Endothelial cell of umbilical vein (primary cell): ENCODE measurements at regions of chr1 and their contacts with region 1.

Region 1: GRCh38 chr1:201224666-201225370 is 34.2 kb downstream of the IGFN1 start:
- DNase-seq: no peak
- H3K4me3 ChIP-seq: no peak overlapping the region
- H3K27ac ChIP-seq: no peak overlapping the region
- H3K4me1 ChIP-seq: no peaks in the 10 kb centered on the region
- H3K27me3 ChIP-seq: peaks cover 0 to 2% of the 10 kb centered on the region in 2 experiments
- CTCF ChIP-seq: no peak
- POLR2A ChIP-seq: no peak

Region 2: DNA sequence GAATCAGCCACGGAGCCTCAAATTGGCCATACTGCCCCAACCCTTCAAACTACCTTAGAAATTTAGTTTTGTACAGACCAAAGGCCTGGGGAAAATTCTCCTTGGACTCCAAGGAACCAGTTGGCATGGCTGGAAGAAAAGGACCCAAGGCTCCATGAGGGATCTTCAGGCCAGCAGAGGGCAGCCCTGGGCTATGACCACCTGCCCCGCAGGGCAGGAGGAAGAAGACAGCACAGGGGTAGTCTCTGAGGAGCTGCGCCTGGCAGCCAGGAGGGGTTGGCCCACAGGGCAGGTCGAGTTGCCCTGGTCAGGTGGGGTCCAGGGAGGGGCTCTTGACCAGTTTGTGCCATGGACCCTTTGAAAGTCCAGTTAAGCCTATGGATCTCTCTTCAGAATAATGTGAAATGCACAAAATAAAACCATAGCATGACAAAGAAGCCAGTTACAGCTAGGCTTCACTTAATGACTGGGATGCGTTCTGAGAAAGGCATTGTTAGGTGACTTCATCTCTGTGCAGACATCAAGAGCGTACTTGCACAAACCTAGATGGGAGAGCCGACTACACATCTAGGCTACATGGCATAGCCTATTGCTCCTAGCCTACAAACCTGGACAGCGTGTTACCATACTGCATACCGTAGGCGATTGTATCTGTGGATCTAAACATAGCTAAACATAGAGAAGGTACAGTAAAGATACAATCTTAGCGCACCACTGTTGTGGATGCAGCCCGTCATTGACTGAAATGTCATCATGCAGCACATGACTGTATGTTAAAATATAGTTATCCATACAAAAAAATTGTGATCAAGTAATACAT is 138.7 kb before region 1 on chr1:
- CTCF ChIA-PET with region 1: interaction called, 8 read pairs
- POLR2A ChIA-PET with region 1: no interaction called
- dilution Hi-C with region 1: no loop called
- intact Hi-C with region 1: loop called (anchors 5 kb)
- DNase-seq: peak; percentile 31
- H3K4me3 ChIP-seq: no peak overlapping the region
- H3K27ac ChIP-seq: no peak overlapping the region
- H3K4me1 ChIP-seq: no peaks in the 10 kb centered on the region
- H3K27me3 ChIP-seq: peaks cover 7% of the 10 kb centered on the region in 2 experiments
- CTCF ChIP-seq: peak; percentile 36 to 70
- POLR2A ChIP-seq: no peak

Region 3: GRCh38 chr1:201149400-201149799 is 75.4 kb before region 1 on chr1:
- CTCF ChIA-PET with region 1: interaction called, 18 read pairs
- POLR2A ChIA-PET with region 1: no interaction called
- dilution Hi-C with region 1: no loop called
- intact Hi-C with region 1: loop called (anchors 1 kb)
- DNase-seq: peak; percentile 29
- H3K4me3 ChIP-seq: no peak overlapping the region
- H3K27ac ChIP-seq: no peak overlapping the region
- H3K4me1 ChIP-seq: peaks cover 5% of the 10 kb centered on the region
- H3K27me3 ChIP-seq: no peaks in the 10 kb centered on the region
- CTCF ChIP-seq: peak in 1 of 2 donors; percentile 30
- POLR2A ChIP-seq: no peak

Region 4: DNA sequence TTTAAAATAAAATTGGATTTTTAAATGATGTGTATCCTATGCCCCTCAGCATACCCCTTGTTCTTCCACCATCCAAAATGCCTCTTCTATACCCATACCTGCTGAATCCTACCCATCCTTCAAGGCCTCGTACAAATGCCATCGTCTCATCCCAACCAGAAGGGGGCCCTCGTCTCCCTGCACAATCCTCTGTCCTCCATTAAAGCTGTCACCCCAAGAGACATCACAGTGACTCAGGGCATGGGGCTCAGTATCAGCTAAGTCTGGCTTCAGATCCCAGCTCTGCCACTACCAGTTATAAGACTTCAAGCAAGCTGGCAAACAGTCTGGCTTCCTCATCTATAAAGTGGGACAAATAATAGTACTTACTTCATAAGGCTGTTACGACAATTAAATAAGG is 10.4 kb before region 1 on chr1:
- CTCF ChIA-PET with region 1: interaction called, 14 read pairs
- POLR2A ChIA-PET with region 1: interaction called, 3 read pairs
- dilution Hi-C with region 1: no loop called
- intact Hi-C with region 1: no loop called
- DNase-seq: no peak
- H3K4me3 ChIP-seq: no peak overlapping the region
- H3K27ac ChIP-seq: no peak overlapping the region
- H3K4me1 ChIP-seq: no peaks in the 10 kb centered on the region
- H3K27me3 ChIP-seq: peaks cover 4% of the 10 kb centered on the region in 2 experiments
- CTCF ChIP-seq: peak in 1 of 2 donors; percentile 7
- POLR2A ChIP-seq: no peak